ENCODE measurements at regions of chr20 and their contacts with region 1.

Region 1: GRCh38 chr20:45946149-45946970 is 11.9 kb downstream of the PCIF1 start:
- DNase-seq: peak; percentile 27
- H3K4me3 Mint-ChIP-seq: no peak overlapping the region
- H3K27ac Mint-ChIP-seq: peak overlapping the region; percentile 73
- H3K4me1 Mint-ChIP-seq: peaks cover 9% of the 10 kb centered on the region
- H3K27me3 Mint-ChIP-seq: no peaks in the 10 kb centered on the region

Region 2: DNA sequence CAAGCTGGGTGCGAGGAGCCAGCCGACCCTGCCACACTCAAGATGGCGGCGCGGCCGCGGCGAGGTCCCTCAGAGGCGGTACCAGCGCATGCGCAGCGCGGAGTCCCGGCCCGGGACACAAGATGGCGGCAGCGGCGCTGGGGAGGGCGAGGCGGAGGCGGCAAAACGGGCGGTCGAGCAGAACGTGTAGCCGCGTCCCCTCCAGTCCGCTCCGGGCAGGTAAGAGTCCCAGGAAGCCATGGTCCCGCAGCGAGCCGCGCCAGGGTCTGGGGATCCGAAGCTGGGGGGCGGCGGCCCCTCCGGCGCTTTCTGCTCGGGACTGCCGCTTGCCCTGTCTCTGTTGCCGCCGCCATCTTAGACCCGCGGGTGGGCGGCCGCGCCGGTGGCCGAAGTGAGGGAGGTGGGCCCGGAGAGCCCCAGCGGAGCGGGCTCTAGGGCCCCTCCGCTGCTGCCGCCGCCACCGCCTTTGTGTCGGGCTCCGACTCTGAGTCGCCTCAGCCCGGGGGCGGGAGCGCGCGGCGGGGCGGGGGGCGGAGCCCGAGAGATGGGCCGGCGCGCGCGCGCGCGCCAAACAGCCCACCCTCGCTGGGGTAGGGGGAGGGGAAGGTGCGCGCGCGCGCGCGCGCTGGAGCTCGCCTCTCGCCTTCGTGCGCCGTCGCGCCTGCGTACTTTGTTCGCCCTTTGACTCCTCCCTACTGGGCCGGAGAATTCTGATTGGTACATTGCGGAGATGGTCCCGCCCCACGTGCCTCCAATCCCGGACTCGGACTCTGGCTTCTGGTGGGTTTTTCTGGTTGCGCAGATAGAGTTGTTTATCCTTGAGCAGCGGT is 11.6 kb before region 1 on chr20 and contains the start of gene PCIF1:
- CTCF ChIA-PET with region 1: interaction called, 14 read pairs
- POLR2A ChIA-PET with region 1: interaction called, 5 read pairs
- DNase-seq: peak; percentile 98
- H3K4me3 Mint-ChIP-seq: peak within 1 kb of the TSS; percentile 93
- H3K27ac Mint-ChIP-seq: peak within 1 kb of the TSS; percentile 97
- H3K4me1 Mint-ChIP-seq: peaks cover 36% of the 10 kb centered on the region
- H3K27me3 Mint-ChIP-seq: no peaks in the 10 kb centered on the region
- total RNA-seq, gene PCIF1: 44.0 to 44.6 TPM

Region 3: GRCh38 chr20:45963059-45964005 is 17.0 kb after region 1 on chr20:
- CTCF ChIA-PET with region 1: interaction called, 27 read pairs
- POLR2A ChIA-PET with region 1: interaction called, 3 read pairs
- DNase-seq: peak; percentile 48
- H3K4me3 Mint-ChIP-seq: no peak overlapping the region
- H3K27ac Mint-ChIP-seq: no peak overlapping the region
- H3K4me1 Mint-ChIP-seq: peaks cover 2% of the 10 kb centered on the region
- H3K27me3 Mint-ChIP-seq: no peaks in the 10 kb centered on the region

Region 4: DNA sequence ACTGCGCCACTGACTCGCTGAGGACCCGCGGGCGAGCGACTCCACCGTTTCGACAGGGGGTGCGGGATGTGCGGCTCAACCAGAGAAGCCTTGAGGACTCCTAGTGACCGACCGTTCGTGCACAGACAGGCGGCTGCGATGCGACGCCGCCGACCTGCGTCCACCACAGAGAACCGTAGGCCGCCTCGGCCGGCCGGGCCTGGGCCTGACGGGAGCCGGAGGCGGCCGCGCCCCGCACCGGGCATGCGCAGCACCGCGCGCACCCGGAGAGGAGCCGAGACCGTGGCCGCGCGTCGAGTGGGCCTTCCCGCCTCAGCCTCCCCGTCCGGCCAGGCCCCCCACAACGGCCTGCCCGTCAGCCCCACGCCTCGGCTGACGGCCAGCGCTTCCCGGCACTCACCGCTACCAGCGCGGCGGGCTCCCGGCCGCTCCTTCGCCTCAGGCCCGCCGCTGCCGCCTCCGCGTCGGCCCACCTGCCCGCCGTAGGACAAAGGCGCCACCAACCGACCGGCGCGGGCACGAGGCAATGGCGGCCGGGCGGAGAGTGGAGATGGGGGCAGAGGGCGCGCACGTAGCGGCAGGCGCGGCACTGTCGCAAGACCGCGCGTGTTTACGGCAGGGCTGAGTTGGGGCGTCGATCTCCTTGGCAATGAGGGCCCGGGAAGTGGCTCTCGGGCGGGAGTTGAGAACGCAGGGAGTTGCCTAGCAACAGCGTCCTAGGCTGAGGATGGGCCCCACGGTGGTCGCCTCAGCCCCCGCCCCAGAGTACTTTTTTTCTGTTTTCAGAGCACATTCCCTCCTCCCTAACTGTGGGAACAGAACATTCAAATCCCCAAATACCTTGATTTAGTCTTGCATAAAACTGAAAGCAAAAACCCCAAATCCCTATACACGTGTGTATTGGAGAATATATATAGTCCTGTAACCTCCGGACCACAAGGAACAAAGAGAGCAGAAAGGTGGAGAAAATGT is 143.3 kb after region 1 on chr20 and contains the start of gene NCOA5:
- CTCF ChIA-PET with region 1: no interaction called
- POLR2A ChIA-PET with region 1: no interaction called
- DNase-seq: peak; percentile 94
- H3K4me3 Mint-ChIP-seq: peak within 1 kb of the TSS; percentile 88
- H3K27ac Mint-ChIP-seq: peak within 1 kb of the TSS; percentile 92
- H3K4me1 Mint-ChIP-seq: peaks cover 47% of the 10 kb centered on the region
- H3K27me3 Mint-ChIP-seq: no peaks in the 10 kb centered on the region
- total RNA-seq, gene NCOA5: 30.9 to 35.0 TPM

Measured in activated CD4-positive, alpha-beta T cell treated with anti-CD3 and anti-CD28 coated beads, Interleukin-2, amount 10 ng/mL, durations not matched to agents 7 days and 5 days (primary cell).